ENCODE measurements at regions of chr3 and their contacts with region 1.

Region 1: DNA sequence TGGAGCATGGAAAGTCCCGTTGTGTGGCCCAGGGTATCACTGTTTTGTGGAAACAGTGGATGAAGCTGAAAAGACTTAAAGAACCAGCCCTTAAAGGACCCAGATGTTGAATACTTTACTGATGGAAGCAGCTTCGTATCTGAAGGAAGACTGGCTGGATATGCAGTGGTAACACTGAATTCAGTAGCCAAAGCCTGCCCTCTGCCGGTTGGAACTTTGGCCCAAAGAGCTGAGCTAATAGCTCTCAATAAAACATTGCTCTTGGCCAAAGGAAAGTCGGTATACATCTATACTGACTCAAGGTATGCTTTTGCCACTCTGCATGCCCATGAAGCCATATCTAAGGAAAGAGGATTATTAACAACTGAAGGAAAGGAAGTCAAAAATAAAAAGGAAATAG is 885.4 kb downstream of the PDCD6IP start:
- DNase-seq: no peak
- H3K4me3 ChIP-seq: no peak overlapping the region
- H3K27ac ChIP-seq: no peak overlapping the region
- H3K4me1 ChIP-seq: no peaks in the 10 kb centered on the region
- H3K27me3 ChIP-seq: no peaks in the 10 kb centered on the region
- CTCF ChIP-seq: peak; percentile 47 to 66 (median 52)
- EP300 ChIP-seq: no peak
- POLR2A ChIP-seq: no peak

Region 2: GRCh38 chr3:33881156-33882064 is 802.4 kb before region 1 on chr3:
- intact Hi-C with region 1: loop called (anchors 2 kb)
- DNase-seq: no peak
- H3K4me3 ChIP-seq: no peak overlapping the region
- H3K27ac ChIP-seq: no peak overlapping the region
- H3K4me1 ChIP-seq: peaks cover 6 to 8% (median 7%) of the 10 kb centered on the region in 4 donors
- H3K27me3 ChIP-seq: no peaks in the 10 kb centered on the region
- CTCF ChIP-seq: no peak
- EP300 ChIP-seq: no peak
- POLR2A ChIP-seq: no peak

Region 3: GRCh38 chr3:33980252-33980651 is 703.6 kb before region 1 on chr3:
- intact Hi-C with region 1: loop called (anchors 5 kb)
- DNase-seq: no peak
- H3K4me3 ChIP-seq: no peak overlapping the region
- H3K27ac ChIP-seq: no peak overlapping the region
- H3K4me1 ChIP-seq: no peaks in the 10 kb centered on the region
- H3K27me3 ChIP-seq: no peaks in the 10 kb centered on the region
- CTCF ChIP-seq: peak; percentile 59 to 71 (median 69)
- EP300 ChIP-seq: no peak
- POLR2A ChIP-seq: no peak

Region 4: GRCh38 chr3:34533451-34533850 is 150.4 kb before region 1 on chr3:
- intact Hi-C with region 1: no loop called
- DNase-seq: no peak
- H3K4me3 ChIP-seq: no peak overlapping the region
- H3K27ac ChIP-seq: no peak overlapping the region
- H3K4me1 ChIP-seq: no peaks in the 10 kb centered on the region
- H3K27me3 ChIP-seq: no peaks in the 10 kb centered on the region
- CTCF ChIP-seq: no peak
- EP300 ChIP-seq: no peak
- POLR2A ChIP-seq: no peak